PC-9 (cell line): ENCODE measurements at regions of chr2 and their contacts with region 1.

Region 1: GRCh38 chr2:30201990-30202389 is 29.3 kb upstream of the LBH start:
- DNase-seq: no peak
- H3K4me3 ChIP-seq: no peak overlapping the region
- H3K27ac ChIP-seq: no peak overlapping the region
- H3K4me1 ChIP-seq: no peaks in the 10 kb centered on the region
- H3K27me3 ChIP-seq: no peaks in the 10 kb centered on the region
- CTCF ChIP-seq: no peak

Region 2: GRCh38 chr2:30293303-30293921 is 91.4 kb after region 1 on chr2:
- CTCF ChIA-PET with region 1: interaction called, 10 read pairs
- POLR2A ChIA-PET with region 1: no interaction called
- intact Hi-C with region 1: no loop called
- DNase-seq: peak; percentile 48 to 90
- H3K4me3 ChIP-seq: no peak overlapping the region
- H3K27ac ChIP-seq: peak overlapping the region; percentile 43
- H3K4me1 ChIP-seq: peaks cover 15% of the 10 kb centered on the region
- H3K27me3 ChIP-seq: no peaks in the 10 kb centered on the region
- CTCF ChIP-seq: no peak